ENCODE measurements at regions of chr17 and their contacts with region 1.

Region 1: DNA sequence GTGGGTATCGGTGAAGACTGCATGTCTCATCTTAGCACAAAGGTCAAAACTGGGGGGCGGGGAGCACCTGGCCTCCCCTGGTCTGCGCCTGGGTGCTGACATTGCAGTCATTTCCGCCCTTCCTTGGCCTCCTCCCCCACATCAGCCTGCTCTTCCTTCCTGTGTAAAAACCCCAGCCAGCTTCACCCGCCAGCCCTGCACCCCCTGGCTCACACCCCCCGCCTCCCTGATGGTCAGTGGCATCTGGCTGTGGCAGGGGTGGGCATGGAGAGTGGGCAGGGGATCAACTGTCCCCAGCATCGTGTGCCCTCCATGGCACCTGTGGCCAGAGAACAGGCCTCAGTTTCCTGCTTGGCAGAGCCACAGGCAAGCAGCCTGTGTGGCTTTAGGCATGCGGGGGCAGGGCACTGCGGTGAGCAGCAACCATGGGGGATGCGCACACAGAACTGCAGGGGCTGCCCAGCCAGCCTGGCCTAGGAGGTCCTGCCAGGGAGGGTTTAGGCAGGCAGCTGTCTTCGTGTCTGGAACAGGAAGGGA is 26.5 kb upstream of the LASP1NB start:
- DNase-seq: peak; percentile 75
- H3K4me3 Mint-ChIP-seq: peak overlapping the region; percentile 73
- H3K27ac Mint-ChIP-seq: peak overlapping the region; percentile 98
- H3K4me1 Mint-ChIP-seq: peaks cover 50% of the 10 kb centered on the region
- H3K27me3 Mint-ChIP-seq: no peaks in the 10 kb centered on the region

Region 2: GRCh38 chr17:38485146-38485468 is 413.8 kb before region 1 on chr17:
- intact Hi-C with region 1: no loop called
- DNase-seq: no peak
- H3K4me3 Mint-ChIP-seq: no peak overlapping the region
- H3K27ac Mint-ChIP-seq: no peak overlapping the region
- H3K4me1 Mint-ChIP-seq: peaks cover 5% of the 10 kb centered on the region
- H3K27me3 Mint-ChIP-seq: peaks cover 4% of the 10 kb centered on the region

Region 3: GRCh38 chr17:38824899-38825761 is 73.8 kb before region 1 on chr17 and contains the start of gene CWC25:
- intact Hi-C with region 1: no loop called
- DNase-seq: peak; percentile 97
- H3K4me3 Mint-ChIP-seq: peak within 1 kb of the TSS; percentile 98
- H3K27ac Mint-ChIP-seq: peak within 1 kb of the TSS; percentile 99
- H3K4me1 Mint-ChIP-seq: peaks cover 20% of the 10 kb centered on the region
- H3K27me3 Mint-ChIP-seq: no peaks in the 10 kb centered on the region
- total RNA-seq, gene CWC25: 23.0 and 26.4 TPM in 2 replicates

Region 4: DNA sequence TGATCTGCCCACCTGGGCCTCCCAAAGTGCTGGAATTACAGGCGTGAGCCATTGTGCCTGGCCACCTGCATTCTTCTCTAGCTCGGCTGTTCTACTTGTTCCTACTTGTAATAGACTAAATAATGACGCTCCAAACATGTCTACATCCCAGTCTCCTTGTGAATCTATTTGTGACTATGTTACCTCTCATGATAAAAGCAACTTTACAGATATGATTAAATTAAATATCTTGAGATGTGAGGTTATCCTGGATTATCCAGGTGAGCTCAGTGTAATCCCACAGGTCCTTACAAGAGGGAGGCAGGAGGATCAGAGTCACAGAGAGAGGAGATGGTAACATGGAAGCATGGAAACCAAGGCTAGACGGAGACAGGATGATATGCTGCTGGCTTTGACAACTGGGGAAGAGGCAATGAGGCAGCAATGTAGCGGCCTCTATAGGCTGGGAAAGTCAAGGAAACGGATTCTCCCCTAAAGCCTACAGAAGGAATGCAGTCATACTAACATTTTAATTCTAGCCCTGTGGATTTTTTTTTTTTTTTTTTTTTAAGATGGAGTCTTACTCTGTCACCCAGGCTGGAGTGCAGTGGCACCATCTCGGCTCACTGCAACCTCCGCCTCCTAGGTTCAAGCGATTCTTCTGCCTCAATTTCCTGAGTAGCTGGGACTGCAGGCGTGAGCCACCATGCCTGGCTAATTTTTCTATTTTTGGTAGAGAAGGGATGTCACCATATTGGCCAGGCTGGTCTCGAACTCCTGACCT is 34.1 kb before region 1 on chr17:
- intact Hi-C with region 1: no loop called
- DNase-seq: no peak
- H3K4me3 Mint-ChIP-seq: no peak overlapping the region
- H3K27ac Mint-ChIP-seq: no peak overlapping the region
- H3K4me1 Mint-ChIP-seq: peaks cover 18% of the 10 kb centered on the region
- H3K27me3 Mint-ChIP-seq: no peaks in the 10 kb centered on the region

Region 5: GRCh38 chr17:38926293-38927070 is 27.6 kb after region 1 on chr17:
- intact Hi-C with region 1: loop called (anchors 2 kb)
- DNase-seq: no peak
- H3K4me3 Mint-ChIP-seq: peak overlapping the region; percentile 23
- H3K27ac Mint-ChIP-seq: peak overlapping the region; percentile 44
- H3K4me1 Mint-ChIP-seq: peaks cover 24% of the 10 kb centered on the region
- H3K27me3 Mint-ChIP-seq: no peaks in the 10 kb centered on the region

Region 6: DNA sequence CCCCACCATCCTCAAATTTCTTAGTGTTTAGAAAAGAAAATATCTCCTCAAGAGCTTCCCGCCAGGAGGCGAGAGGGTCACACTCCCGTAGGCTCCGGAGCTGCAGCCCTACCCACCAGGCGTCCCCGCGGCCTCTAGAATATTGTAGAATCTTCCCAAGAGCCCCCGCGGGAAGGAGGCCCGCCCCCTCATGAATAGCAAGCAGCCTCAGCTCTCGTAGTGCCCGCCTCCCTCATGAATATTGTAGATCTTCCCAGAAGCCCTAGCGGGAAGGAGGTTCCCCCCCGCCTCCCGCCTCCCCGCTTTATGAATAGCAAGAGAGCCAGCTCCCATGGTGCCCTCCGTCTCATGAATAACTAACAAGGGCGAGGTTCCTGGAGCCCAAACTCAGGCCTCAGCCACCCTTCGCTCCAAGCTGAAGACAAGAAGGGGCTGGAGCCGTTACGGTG is 68.4 kb after region 1 on chr17 and contains the start of gene FBXO47:
- intact Hi-C with region 1: loop called (anchors 10 kb)
- DNase-seq: peak; percentile 71
- H3K4me3 Mint-ChIP-seq: peak within 1 kb of the TSS; percentile 73
- H3K27ac Mint-ChIP-seq: peak within 1 kb of the TSS; percentile 65
- H3K4me1 Mint-ChIP-seq: peaks cover 9% of the 10 kb centered on the region
- H3K27me3 Mint-ChIP-seq: peaks cover 3% of the 10 kb centered on the region
- total RNA-seq, gene FBXO47: not detected in 2 replicates